ENCODE measurements at regions of chr18 and their contacts with region 1.

Region 1: DNA sequence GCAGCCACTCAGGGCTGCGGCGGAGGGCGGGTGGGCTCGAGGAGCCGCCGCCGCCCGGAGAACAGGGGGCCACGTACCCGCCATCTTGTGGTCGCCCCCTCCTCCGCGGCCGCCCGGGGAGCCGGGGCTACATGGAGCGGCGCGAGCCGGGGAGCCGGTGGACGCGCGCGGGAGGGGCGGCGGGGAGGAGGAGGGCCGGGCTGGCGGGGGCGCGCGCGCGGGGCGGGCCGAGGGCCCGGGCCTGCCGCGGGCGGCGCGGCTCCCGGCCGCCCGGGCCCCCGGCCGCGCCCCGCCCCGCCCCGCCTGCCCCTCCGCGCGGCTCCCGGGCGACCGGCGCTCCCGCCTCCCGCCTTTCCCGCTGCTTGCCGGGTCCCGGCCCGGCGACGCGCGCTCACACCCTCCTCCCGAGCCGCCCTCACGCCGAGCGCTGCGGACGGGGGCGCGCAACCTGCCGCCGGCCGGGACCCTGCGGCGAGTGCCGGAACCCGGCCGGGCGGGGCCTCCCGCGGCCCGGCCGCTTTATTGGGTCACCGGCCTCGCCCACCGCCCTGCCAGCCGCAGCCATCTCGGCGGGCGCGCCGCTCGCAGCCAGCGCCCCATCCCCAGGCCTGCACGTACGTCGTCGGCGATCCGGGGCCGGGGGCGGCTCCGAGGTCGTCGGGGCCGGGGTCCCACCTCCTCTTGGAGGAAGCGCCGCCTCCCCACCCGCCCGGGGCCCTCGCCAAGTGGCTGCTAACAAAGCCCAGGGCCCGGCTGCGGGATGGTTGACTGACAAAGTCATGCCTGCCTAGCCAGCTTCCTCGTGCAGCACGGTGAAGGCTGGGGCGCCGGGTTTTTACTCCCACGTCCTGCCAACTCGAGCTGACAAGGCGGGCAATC is at the start of gene PPP4R1:
- DNase-seq: peak; percentile 56 to 80
- H3K4me3 ChIP-seq: peak within 1 kb of the TSS; percentile 94
- H3K27ac ChIP-seq: peak within 1 kb of the TSS; percentile 97
- H3K4me1 ChIP-seq: peaks cover 71% of the 10 kb centered on the region
- H3K27me3 ChIP-seq: no peaks in the 10 kb centered on the region
- CTCF ChIP-seq: no peak
- total RNA-seq, gene PPP4R1: 157 and 167 TPM in 2 replicates

Region 2: DNA sequence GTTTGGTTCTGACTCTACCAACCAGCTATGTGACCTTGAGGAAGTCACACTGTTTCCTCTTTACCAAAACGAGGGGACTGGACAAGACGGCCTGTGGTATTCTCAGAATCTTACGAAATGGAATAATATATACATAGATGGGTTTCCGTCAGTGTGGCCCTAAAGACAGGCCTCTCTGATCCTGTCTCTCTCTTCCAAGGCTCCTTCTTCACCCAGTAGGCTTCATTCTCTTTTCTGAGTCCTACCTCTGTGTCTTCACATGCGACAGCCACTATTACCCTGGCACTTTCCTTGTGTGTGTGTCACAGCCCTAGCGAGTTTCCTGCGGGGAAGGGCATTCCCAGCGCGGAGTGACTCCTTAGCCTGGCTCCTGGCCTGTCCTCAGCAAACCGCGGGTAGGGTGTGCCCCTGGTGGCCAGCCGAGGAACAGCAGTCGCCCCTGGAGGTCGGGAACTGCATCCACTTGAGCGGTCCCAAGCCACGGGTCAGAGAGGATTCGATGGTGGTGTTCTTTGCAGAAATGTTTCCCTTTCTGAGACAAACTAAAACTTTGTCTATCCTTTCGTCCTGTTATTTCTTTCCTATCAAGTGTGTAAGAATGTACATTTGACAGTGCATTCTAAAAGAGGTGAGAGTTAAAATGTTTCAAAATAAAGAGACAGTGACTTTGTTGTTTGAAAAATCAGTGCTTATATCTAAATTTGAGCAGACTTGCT is 156.8 kb after region 1 on chr18:
- CTCF ChIA-PET with region 1: no interaction called
- POLR2A ChIA-PET with region 1: no interaction called
- intact Hi-C with region 1: loop called (anchors 5 kb)
- DNase-seq: peak in 1 of 2 experiments; percentile 81
- H3K4me3 ChIP-seq: no peak overlapping the region
- H3K27ac ChIP-seq: no peak overlapping the region
- H3K4me1 ChIP-seq: peaks cover 12% of the 10 kb centered on the region
- H3K27me3 ChIP-seq: no peaks in the 10 kb centered on the region
- CTCF ChIP-seq: peak; percentile 69